ENCODE measurements at regions of chr3 and their contacts with region 1.

Region 1: GRCh38 chr3:60933824-60934223 is 317.4 kb downstream of the FHIT start:
- DNase-seq: no peak
- H3K4me3 ChIP-seq: no peak overlapping the region
- H3K4me3 Mint-ChIP-seq: no peak overlapping the region
- H3K27ac Mint-ChIP-seq: no peak overlapping the region
- H3K4me1 ChIP-seq: no peaks in the 10 kb centered on the region
- H3K4me1 Mint-ChIP-seq: no peaks in the 10 kb centered on the region
- H3K27me3 ChIP-seq: no peaks in the 10 kb centered on the region
- H3K27me3 Mint-ChIP-seq: no peaks in the 10 kb centered on the region
- CTCF ChIP-seq: no peak

Region 2: DNA sequence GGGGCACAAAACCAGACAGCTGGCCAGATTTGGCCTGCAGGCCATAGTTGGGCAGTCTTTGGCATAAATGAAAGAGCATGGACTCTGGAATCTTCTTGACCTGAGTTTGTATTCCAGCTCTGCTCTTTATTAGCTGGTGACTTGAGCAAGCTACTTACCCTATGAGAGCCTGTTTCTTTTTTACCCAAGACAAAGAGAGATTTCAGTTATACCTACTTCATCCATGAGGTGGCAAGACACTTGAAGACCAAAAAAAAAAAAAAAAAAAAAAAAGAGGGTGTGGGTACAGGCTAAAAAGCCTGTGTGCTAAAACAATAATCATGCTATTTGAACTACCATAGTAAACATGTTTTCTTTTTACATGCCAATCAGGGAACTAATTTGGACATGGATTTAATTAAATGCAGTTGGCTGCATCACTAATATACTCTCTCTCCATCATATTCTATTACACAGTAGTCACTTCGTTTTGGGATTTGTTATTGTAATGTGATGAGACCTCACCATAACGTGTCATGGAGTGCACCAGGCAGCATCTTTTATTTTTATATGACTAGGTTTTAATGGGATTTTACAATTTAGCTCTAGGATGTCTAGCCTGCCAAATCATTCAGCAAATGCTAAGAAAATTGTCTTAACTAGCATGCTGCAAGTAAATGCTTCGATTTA is 426.6 kb after region 1 on chr3:
- CTCF ChIA-PET with region 1: interaction called, 11 read pairs
- POLR2A ChIA-PET with region 1: no interaction called
- intact Hi-C with region 1: no loop called
- DNase-seq: no peak
- H3K4me3 ChIP-seq: no peak overlapping the region
- H3K4me3 Mint-ChIP-seq: no peak overlapping the region
- H3K27ac Mint-ChIP-seq: no peak overlapping the region
- H3K4me1 ChIP-seq: no peaks in the 10 kb centered on the region
- H3K4me1 Mint-ChIP-seq: no peaks in the 10 kb centered on the region
- H3K27me3 ChIP-seq: no peaks in the 10 kb centered on the region
- H3K27me3 Mint-ChIP-seq: peaks cover 9% of the 10 kb centered on the region
- CTCF ChIP-seq: no peak

Measured in Caco-2 (cell line).